ENCODE measurements at regions of chr9 and their contacts with region 1.

Region 1: GRCh38 chr9:26234865-26235264 is 556.6 kb upstream of the TUSC1 start:
- H3K4me3 Mint-ChIP-seq: no peak overlapping the region
- H3K27ac Mint-ChIP-seq: no peak overlapping the region
- H3K4me1 Mint-ChIP-seq: no peaks in the 10 kb centered on the region
- H3K27me3 Mint-ChIP-seq: no peaks in the 10 kb centered on the region

Region 2: GRCh38 chr9:26193237-26193636 is 41.6 kb before region 1 on chr9:
- intact Hi-C with region 1: loop called (anchors 5 kb)
- H3K4me3 Mint-ChIP-seq: no peak overlapping the region
- H3K27ac Mint-ChIP-seq: no peak overlapping the region
- H3K4me1 Mint-ChIP-seq: no peaks in the 10 kb centered on the region
- H3K27me3 Mint-ChIP-seq: no peaks in the 10 kb centered on the region

Region 3: GRCh38 chr9:26426551-26427131 is 191.8 kb after region 1 on chr9:
- intact Hi-C with region 1: no loop called
- H3K4me3 Mint-ChIP-seq: no peak overlapping the region
- H3K27ac Mint-ChIP-seq: no peak overlapping the region
- H3K4me1 Mint-ChIP-seq: no peaks in the 10 kb centered on the region
- H3K27me3 Mint-ChIP-seq: no peaks in the 10 kb centered on the region

Region 4: DNA sequence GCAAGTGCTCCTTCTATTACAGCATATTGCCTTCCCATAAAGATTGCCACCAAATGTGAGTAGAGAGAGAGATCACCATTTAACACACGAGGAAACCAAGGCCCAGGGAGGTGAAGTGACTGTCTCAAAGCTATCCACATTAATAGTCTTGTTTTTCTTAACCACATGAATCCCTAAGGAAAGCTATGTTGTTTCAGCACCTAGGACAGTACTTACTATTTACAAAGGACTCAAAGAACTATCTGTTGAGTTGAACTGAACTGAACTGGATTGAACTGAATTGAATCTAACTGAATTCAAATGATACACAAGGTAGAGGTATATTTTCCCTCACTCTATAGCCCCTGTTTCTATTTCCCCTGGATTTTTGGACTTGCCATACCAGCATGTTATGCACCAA is 227.3 kb after region 1 on chr9:
- intact Hi-C with region 1: no loop called
- H3K4me3 Mint-ChIP-seq: no peak overlapping the region
- H3K27ac Mint-ChIP-seq: no peak overlapping the region
- H3K4me1 Mint-ChIP-seq: no peaks in the 10 kb centered on the region
- H3K27me3 Mint-ChIP-seq: no peaks in the 10 kb centered on the region

Region 5: DNA sequence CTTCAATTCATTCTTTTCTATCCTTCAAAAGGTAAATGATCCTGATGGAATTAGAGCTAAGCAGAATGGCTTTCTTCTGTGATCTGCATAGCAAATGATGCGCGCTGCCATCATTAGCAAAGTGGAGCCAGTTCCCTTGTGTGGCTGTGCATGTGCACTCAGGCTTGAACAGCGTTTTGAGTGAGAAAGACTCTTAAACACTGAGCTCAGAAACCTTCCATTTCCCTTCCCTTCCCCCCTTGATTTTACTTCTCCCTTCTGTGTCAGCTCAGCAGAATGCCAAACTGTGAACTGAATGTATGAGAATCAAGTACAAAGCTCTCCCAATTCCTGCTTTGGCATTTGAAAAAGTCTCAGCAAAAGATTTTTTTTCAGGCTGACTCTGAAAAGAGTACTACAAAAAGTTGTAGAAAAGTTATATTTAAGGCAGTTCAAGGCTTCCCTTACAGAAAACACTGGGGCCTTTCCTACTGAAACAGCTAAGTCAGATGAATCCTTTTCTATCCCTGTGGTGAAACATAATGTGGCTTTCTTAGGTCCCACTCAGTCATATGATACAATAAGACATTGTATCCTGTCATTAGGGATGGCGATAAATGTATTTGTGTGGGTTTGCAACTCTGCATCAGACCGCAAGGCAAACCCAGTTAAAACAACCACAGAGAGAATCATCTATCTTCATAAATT is 434.9 kb after region 1 on chr9:
- intact Hi-C with region 1: no loop called
- H3K4me3 Mint-ChIP-seq: no peak overlapping the region
- H3K27ac Mint-ChIP-seq: no peak overlapping the region
- H3K4me1 Mint-ChIP-seq: no peaks in the 10 kb centered on the region
- H3K27me3 Mint-ChIP-seq: no peaks in the 10 kb centered on the region

Measured in dendritic cell treated with granulocyte-macrophage colony-stimulating factor and Interleukin-4, amounts not matched to agents 40 ng/mL and 50 ng/mL, for 4 days (primary cell).